ENCODE measurements at regions of chr7 and their contacts with region 1.

Region 1: GRCh38 chr7:18352339-18353255 is 143.0 kb upstream of the HDAC9 start:
- DNase-seq: peak; percentile 45
- H3K4me3 ChIP-seq: no peak overlapping the region
- H3K27ac ChIP-seq: no peak overlapping the region
- H3K27me3 ChIP-seq: no peaks in the 10 kb centered on the region
- CTCF ChIP-seq: peak; percentile 63

Region 2: DNA sequence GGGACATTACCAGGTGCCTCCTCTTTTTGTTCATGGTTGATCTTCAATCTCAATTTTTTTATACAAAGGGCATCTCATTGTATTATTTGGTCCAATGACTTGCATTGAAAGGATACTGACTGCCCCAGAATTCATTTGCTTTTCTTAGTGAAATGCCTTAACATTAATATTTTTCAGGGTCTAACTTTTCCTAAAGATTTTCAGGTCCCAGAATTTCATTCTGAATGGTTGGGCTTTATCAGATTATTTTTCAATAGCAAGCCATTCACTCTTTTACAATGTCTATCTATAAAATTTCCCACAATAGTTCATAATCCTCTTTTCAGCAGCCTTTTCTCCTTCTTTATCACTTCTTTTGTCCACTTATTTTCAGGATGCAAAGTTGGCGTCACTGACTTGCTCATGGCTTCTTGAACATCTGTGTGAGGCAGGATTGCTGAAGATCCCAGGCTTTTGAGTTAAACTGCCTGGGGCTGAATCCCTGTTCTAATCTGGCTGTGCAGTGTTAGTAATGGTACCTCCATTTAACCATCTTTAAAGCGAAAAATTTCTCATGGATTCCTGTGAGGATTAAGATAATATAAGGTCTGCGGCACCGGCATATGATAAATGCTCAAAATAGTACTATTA is 11.3 kb after region 1 on chr7:
- CTCF ChIA-PET with region 1: interaction called, 17 read pairs
- POLR2A ChIA-PET with region 1: no interaction called
- DNase-seq: no peak
- H3K4me3 ChIP-seq: no peak overlapping the region
- H3K27ac ChIP-seq: no peak overlapping the region
- H3K27me3 ChIP-seq: no peaks in the 10 kb centered on the region
- CTCF ChIP-seq: no peak

Region 3: DNA sequence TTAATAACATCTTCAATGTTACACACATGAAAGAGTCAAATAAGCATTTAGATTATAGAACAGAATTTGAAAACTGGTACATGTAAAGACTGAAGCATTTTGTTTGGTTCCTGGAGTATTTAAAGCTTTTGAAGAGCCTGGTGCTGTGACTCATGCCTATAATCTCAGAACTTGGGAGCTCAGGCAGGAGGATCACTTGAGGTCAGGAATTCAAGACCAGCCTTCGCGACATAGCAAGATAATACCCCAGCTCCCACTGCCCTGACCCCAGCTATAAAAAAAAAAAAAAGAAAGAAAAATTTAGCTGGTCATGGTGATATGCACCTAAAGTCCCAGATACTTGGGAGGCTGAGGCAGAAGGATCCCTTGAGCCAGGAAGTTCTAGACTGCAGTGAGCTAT is 230.7 kb after region 1 on chr7:
- CTCF ChIA-PET with region 1: interaction called, 13 read pairs
- POLR2A ChIA-PET with region 1: no interaction called
- DNase-seq: no peak
- H3K4me3 ChIP-seq: no peak overlapping the region
- H3K27ac ChIP-seq: no peak overlapping the region
- H3K27me3 ChIP-seq: no peaks in the 10 kb centered on the region
- CTCF ChIP-seq: no peak

Region 4: DNA sequence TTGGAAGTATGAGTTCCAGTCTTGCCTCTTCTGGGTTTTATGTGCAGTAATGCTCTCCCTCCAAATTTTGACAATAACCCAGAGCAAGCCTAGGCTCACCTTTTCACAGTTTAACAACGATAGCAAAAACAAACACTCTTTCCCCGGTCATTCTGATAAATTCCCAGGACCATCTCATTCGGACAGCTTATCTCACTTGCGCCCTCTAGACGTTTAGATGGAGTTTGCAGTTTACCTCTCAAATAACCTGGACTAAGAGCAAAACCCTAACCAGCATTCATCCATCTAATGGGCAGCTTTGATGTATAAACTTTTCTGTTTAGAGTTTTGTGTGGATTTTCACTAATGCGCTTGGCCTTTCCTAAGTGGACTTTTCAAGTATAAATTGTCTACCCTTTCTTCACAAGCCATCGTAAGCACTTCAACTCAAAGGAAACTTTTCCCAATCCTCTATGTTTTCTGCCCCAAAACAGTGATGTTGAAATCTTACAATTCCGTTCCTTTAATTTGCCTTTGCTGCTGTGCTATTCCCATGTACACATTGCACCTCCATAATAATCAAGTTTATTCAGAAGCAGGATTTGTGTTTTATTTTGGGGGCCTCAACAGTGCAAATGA is 257.8 kb after region 1 on chr7:
- CTCF ChIA-PET with region 1: interaction called, 19 read pairs
- POLR2A ChIA-PET with region 1: no interaction called
- DNase-seq: no peak
- H3K4me3 ChIP-seq: no peak overlapping the region
- H3K27ac ChIP-seq: no peak overlapping the region
- H3K27me3 ChIP-seq: no peaks in the 10 kb centered on the region
- CTCF ChIP-seq: peak; percentile 67

Region 5: DNA sequence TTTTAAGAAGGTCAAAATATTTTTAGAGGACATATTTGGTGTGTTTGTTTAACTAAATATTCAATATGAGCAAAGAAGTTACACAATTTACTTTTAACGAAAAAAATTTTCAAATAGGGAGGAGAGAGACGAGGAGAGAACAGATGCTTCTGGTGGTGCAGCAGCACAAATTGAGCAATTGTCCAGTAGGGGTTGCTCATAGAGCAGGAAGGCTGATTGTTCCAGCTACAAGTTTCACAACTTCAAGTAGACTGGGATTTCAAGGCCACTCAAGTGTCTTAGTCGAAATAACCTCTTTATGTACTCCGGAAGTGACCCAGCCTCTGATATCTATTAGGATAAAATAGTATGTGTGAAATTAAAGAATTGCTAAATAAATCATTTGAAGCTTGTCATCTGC is 340.8 kb after region 1 on chr7:
- CTCF ChIA-PET with region 1: interaction called, 10 read pairs
- POLR2A ChIA-PET with region 1: no interaction called
- DNase-seq: peak; percentile 63
- H3K4me3 ChIP-seq: no peak overlapping the region
- H3K27ac ChIP-seq: no peak overlapping the region
- H3K27me3 ChIP-seq: no peaks in the 10 kb centered on the region
- CTCF ChIP-seq: peak; percentile 85

Measured in AG04450 (cell line).